ENCODE measurements at regions of chr7 and their contacts with region 1.

Region 1: DNA sequence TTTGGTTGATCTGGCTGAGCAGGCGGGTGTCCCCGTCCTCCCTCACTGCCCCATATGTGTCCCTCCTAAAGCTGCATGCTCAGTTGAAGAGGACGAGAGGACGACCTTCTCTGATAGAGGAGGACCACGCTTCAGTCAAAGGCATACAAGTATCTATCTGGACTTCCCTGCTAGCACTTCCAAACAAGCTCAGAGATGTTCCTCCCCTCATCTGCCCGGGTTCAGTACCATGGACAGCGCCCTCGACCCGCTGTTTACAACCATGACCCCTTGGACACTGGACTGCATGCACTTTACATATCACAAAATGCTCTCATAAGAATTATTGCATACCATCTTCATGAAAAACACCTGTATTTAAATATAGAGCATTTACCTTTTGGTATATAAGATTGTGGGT is 26.9 kb upstream of the TRIM56 start:
- DNase-seq: peak; percentile 8
- H3K4me3 ChIP-seq: no peak overlapping the region
- H3K27ac ChIP-seq: no peak overlapping the region
- H3K4me1 ChIP-seq: no peaks in the 10 kb centered on the region
- H3K27me3 ChIP-seq: peaks cover 2% of the 10 kb centered on the region
- CTCF ChIP-seq: no peak

Region 2: DNA sequence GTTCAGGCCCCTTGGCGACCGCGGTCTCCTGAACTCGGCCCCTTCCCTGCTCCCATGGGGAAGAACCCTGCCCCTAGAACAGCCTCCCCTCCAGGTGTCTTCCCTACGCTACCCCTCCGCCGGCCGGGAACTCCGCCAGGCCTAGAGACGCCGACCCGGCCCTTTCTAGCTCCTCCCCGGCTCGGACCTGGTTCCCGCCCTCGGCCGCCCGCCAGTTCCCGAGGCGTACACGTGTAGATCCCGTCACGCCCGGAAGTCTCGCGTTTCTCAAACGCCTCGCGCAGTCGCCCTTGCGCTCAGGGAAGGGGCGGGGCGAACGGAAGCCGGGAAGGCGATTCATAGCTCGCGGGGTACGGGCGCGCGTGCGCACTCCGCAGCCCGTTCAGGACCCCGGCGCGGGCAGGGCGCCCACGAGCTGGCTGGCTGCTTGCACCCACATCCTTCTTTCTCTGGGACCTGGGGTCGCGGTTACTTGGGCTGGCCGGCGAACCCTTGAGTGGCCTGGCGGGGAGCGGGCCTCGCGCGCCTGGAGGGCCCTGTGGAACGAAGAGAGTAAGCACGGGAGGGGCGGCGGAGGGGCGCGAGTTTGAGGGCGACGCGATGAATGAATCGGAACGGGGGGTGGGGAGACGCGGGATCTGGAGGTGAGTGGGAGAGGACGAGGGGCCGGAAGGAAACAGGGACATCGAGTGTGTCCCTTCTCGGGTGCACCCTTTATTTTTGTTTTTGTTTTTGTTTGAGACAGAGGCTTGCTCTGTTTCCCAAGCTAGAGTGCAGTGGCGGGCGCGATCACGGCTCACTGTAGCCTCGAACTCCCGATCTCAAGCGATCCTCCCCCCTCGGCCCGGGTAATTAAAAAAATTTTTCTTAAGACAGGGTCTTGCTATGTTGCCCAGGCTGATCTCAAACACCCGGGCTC is 352.3 kb before region 1 on chr7 and contains the start of gene POP7:
- CTCF ChIA-PET with region 1: no interaction called
- dilution Hi-C with region 1: no loop called
- in situ Hi-C with region 1: loop called in 1 of 2 experiments (anchors 25 kb)
- intact Hi-C with region 1: loop called (anchors 2 kb)
- DNase-seq: peak; percentile 97
- H3K4me3 ChIP-seq: peak within 1 kb of the TSS; percentile 84 to 98 (median 90)
- H3K27ac ChIP-seq: peak within 1 kb of the TSS; percentile 72
- H3K4me1 ChIP-seq: peaks cover 12% of the 10 kb centered on the region
- H3K27me3 ChIP-seq: no peaks in the 10 kb centered on the region
- CTCF ChIP-seq: no peak
- total RNA-seq, gene POP7: 29.2 to 52.2 TPM

Region 3: GRCh38 chr7:100896732-100897608 is 161.4 kb before region 1 on chr7:
- CTCF ChIA-PET with region 1: no interaction called
- dilution Hi-C with region 1: loop called (anchors 5 kb)
- in situ Hi-C with region 1: loop called in 1 of 2 experiments (anchors 5 kb)
- intact Hi-C with region 1: loop called (anchors 1 kb)
- DNase-seq: no peak
- H3K4me3 ChIP-seq: no peak overlapping the region
- H3K27ac ChIP-seq: no peak overlapping the region
- H3K4me1 ChIP-seq: peaks cover 9% of the 10 kb centered on the region
- H3K27me3 ChIP-seq: peaks cover 15% of the 10 kb centered on the region
- CTCF ChIP-seq: peak; percentile 44 to 75

Region 4: GRCh38 chr7:100965723-100966541 is 92.4 kb before region 1 on chr7:
- CTCF ChIA-PET with region 1: no interaction called
- dilution Hi-C with region 1: no loop called
- in situ Hi-C with region 1: loop called (anchors 5 kb)
- intact Hi-C with region 1: loop called (anchors 1 kb)
- DNase-seq: peak; percentile 74
- H3K4me3 ChIP-seq: peak overlapping the region in 2 of 3 experiments; percentile 23 to 34
- H3K27ac ChIP-seq: no peak overlapping the region
- H3K4me1 ChIP-seq: peaks cover 7% of the 10 kb centered on the region
- H3K27me3 ChIP-seq: peaks cover 17% of the 10 kb centered on the region
- CTCF ChIP-seq: peak; percentile 82 to 86

Region 5: GRCh38 chr7:101009629-101010028 is 48.7 kb before region 1 on chr7:
- CTCF ChIA-PET with region 1: no interaction called
- dilution Hi-C with region 1: loop called (anchors 5 kb)
- in situ Hi-C with region 1: no loop called
- intact Hi-C with region 1: no loop called
- DNase-seq: no peak
- H3K4me3 ChIP-seq: no peak overlapping the region
- H3K27ac ChIP-seq: no peak overlapping the region
- H3K4me1 ChIP-seq: no peaks in the 10 kb centered on the region
- H3K27me3 ChIP-seq: no peaks in the 10 kb centered on the region
- CTCF ChIP-seq: no peak

Region 6: DNA sequence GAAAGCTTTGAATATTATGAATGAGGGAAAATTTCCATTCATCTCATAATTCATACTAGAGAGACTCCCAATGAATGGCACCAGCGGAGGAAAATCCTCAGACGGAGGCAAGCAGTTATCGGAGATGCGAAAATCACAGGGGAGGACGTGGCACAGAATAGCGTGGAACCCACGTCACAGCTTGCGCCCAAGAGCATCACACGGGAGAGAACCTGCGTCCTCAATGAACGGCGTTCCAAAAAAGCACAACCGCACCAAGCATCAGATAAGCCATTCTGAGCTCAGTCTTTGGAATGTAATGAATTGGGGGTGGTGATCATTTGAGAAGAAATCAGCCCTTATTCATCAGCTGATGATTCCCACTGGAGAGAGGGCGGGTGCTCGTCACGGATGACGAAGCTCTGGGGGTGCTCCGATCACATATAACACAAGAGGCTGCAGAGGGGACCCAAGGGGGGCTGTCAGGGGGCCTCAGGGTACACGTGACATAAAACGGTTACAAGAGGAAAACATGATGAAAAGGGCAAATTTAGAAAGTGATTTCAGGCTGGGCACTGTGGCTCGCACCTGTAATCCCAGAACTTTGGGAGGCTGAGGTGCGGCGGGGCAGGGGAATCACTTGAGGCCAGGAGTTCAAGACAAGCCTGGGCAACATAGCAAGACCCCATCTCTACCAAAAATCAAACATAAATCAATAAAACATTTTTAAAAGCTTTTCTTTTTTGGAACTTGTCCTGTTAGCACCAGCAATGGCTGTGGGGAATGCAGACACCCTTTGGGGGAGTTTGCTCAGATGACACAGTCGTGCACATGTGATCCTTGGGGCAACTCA is 220.3 kb after region 1 on chr7:
- CTCF ChIA-PET with region 1: no interaction called
- dilution Hi-C with region 1: loop called (anchors 5 kb)
- in situ Hi-C with region 1: no loop called
- intact Hi-C with region 1: no loop called
- DNase-seq: no peak
- H3K4me3 ChIP-seq: no peak overlapping the region
- H3K27ac ChIP-seq: no peak overlapping the region
- H3K4me1 ChIP-seq: no peaks in the 10 kb centered on the region
- H3K27me3 ChIP-seq: no peaks in the 10 kb centered on the region
- CTCF ChIP-seq: no peak

Region 7: DNA sequence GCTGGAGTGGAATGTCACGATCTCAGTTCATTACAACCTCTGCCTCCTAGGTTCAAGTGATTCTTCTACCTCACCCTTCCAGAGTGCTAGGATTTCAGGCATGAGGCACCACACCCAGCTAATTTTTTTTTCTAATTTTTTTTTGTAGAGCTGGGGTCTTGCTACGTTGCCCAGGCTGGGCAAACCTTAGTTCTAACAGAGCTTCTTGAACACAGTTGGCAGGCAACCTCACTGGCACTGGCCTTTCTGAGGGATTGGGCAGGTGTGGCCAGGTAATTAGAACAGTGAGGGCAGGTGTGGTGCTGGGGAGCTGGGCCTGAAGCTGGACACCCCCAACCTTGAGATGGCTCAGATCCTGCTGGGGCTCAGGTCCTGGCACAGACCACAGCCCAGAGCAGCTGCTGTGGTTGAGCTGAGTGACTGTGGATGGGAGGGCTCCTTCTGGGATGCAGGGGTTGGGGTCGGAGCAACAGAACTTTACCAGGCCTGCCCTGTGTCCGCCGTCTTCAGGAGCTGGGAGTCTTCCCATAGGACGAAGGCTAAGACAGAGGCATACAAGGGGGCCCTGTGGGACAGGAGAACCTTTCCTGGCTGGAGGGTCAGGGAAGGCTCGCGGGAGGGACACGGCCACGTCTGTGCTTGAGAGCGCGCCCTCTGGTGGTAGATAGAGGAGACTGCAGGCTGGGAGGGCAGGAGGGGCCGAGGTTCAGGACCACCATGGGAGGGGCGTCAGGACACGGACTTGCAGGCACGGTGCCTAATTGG is 352.6 kb after region 1 on chr7:
- CTCF ChIA-PET with region 1: no interaction called
- dilution Hi-C with region 1: no loop called
- in situ Hi-C with region 1: no loop called
- intact Hi-C with region 1: no loop called
- DNase-seq: no peak
- H3K4me3 ChIP-seq: no peak overlapping the region
- H3K27ac ChIP-seq: no peak overlapping the region
- H3K4me1 ChIP-seq: no peaks in the 10 kb centered on the region
- H3K27me3 ChIP-seq: no peaks in the 10 kb centered on the region
- CTCF ChIP-seq: peak; percentile 61 to 77